Panc1 (cell line): ENCODE measurements at regions of chr11 and their contacts with region 1.

Region 1: DNA sequence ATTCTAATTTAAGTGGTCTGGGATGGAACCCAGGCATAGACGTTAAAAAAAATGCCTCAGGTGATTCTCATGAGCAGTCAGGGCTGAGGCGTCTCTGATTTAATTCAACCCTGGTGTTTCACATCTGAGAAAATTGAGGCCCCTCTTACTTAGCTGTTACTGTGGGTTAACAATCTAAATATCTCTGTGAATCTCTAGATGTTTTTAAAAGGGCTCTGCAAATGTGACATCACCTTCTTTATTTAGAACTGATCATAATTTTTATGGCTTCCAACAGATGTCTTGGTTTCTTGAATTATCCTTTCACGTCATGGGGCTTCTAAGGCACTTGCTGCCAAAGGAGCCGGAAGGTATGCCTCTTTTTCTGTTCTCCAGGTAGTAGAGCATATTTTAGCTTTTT is 76.1 kb upstream of the LIN7C start:
- DNase-seq: no peak
- ATAC-seq: no peak
- H3K4me3 ChIP-seq: no peak overlapping the region
- H3K27ac ChIP-seq: no peak overlapping the region
- H3K4me1 ChIP-seq: no peaks in the 10 kb centered on the region
- H3K27me3 ChIP-seq: peaks cover 2% of the 10 kb centered on the region; the same call in 1 of the 2 replicates
- CTCF ChIP-seq: no peak

Region 2: GRCh38 chr11:27392278-27393114 is 190.1 kb before region 1 on chr11:
- CTCF ChIA-PET with region 1: no interaction called
- POLR2A ChIA-PET with region 1: interaction called, 18 read pairs
- in situ Hi-C with region 1: no loop called
- intact Hi-C with region 1: no loop called
- DNase-seq: no peak
- ATAC-seq: no peak
- H3K4me3 ChIP-seq: no peak overlapping the region
- H3K27ac ChIP-seq: peak overlapping the region; percentile 65
- H3K4me1 ChIP-seq: peaks cover 84% of the 10 kb centered on the region
- H3K27me3 ChIP-seq: no peaks in the 10 kb centered on the region
- CTCF ChIP-seq: no peak

Region 3: DNA sequence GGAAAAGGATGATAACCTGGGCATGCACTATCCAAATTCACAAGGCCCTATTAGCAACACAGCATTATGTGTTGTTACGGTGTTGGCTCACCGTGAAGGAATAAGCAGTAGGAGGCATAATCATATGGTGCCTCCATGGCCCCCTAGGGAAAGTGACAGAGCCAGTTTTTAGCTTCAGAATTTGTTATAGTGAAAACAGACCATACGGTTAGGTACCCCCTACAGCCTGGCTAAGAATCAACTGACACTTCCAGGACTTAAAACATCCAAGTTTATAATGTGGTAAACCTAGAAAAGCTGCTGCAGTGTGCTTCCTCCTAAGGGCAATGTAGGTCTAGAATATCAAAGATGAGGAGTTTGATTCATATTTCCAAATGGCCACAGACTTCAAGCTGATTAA is 494.9 kb after region 1 on chr11:
- CTCF ChIA-PET with region 1: no interaction called
- POLR2A ChIA-PET with region 1: no interaction called
- in situ Hi-C with region 1: no loop called
- intact Hi-C with region 1: no loop called
- DNase-seq: no peak
- ATAC-seq: no peak
- H3K4me3 ChIP-seq: no peak overlapping the region
- H3K27ac ChIP-seq: no peak overlapping the region
- H3K4me1 ChIP-seq: no peaks in the 10 kb centered on the region
- H3K27me3 ChIP-seq: no peaks in the 10 kb centered on the region
- CTCF ChIP-seq: no peak